BJ (cell line): ENCODE measurements at regions of chr9 and their contacts with region 1.

Region 1: GRCh38 chr9:133417541-133418461 is at the start of gene REXO4:
- DNase-seq: peak; percentile 23
- H3K4me3 ChIP-seq: peak within 1 kb of the TSS; percentile 86
- H3K27me3 ChIP-seq: no peaks in the 10 kb centered on the region
- CTCF ChIP-seq: no peak
- polyA plus RNA-seq, gene REXO4: 22.7 and 24.0 TPM in 2 replicates

Region 2: DNA sequence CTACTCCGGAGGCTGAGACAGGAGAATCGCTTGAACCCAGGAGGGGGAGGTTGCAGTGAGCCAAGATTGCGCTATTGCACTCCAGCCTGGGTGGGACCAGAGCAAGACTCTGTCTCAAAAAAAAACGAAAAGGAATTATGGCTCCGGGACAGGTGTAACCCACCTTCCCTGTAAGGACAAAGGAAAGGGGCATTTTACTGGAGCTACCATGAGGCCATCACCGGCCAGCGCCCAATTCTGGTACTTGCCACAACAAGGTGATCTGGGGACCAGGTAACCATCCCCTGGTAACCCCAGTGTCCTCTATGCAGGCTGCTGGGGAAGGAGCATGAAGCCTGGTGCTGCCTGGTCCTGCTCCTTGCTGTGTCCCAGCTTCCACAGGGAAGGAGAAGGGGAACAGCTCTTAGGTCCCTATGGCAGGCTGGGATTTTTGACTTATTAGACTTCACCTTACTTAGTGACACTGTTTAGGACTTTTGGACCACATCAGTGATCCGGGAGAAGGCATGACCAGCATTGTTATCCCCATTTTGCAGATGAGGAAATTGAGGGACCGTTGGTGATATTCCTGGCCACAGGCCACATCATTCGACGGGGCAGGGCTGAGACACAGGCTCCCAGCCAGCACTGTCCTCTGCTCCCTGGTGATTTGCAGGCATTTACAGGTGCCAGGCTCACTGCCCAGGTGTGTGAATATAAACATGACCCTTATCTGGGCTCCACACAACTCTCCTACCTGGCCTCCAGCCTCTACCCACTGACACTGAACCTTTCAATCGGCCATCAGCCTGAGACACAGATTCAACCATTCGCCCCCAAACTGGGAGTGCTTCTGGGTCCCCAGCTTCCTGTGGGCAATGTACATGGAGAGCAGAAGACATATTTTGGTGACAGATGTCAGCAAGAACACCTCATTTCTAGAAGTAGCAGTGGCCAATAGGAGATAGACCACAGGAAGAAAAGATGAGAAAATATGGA is 116.3 kb before region 1 on chr9:
- CTCF ChIA-PET with region 1: no interaction called
- POLR2A ChIA-PET with region 1: no interaction called
- DNase-seq: no peak
- H3K4me3 ChIP-seq: no peak overlapping the region
- H3K27me3 ChIP-seq: no peaks in the 10 kb centered on the region; the same call in 1 of the 2 replicates
- CTCF ChIP-seq: no peak

Region 3: DNA sequence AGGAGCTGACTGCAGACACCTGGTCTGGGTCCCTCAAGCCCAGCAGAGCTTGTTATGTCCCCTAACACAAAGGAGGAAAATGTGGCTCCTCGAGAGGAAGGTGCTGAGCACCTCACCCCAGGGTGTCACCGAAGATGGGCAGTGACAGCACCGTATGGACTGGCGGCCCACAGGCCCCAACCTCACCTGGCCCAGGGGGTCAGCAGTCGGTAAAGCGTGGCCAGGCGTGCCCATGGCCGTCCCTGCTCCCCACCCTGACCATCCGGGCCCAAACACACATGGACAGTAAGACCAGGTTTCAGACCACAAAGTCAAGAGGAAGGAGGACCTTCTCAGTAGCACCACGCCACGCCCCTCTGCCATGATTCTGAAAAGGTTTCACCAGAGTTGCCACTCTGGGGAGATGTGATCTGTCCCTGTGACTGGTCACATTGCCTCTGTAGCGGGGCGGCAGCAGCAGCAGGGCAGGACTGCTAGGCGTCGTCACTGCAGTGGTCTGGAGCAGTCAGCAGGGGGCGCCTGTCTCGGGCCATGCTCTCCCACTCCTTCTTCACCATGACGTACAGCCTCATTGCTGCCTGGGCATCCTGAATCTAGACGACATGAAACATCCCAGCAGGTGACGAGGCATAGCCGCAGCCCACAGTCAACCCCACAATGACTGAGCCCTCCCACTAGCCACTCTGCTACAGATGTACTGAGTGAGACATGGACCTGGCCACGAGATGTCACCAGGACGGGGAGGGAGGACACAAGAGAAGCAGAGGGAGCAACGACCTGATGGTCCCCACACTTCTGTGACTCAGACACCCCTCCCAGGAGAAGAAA is 11.1 kb before region 1 on chr9:
- CTCF ChIA-PET with region 1: interaction called, 13 read pairs
- POLR2A ChIA-PET with region 1: no interaction called
- DNase-seq: no peak
- H3K4me3 ChIP-seq: no peak overlapping the region
- H3K27me3 ChIP-seq: no peaks in the 10 kb centered on the region
- CTCF ChIP-seq: peak; percentile 95

Region 4: GRCh38 chr9:133429641-133430161 is 11.9 kb after region 1 on chr9:
- CTCF ChIA-PET with region 1: no interaction called
- POLR2A ChIA-PET with region 1: no interaction called
- DNase-seq: no peak
- H3K4me3 ChIP-seq: no peak overlapping the region
- H3K27me3 ChIP-seq: peaks cover 9% of the 10 kb centered on the region
- CTCF ChIP-seq: peak; percentile 56